Activated naive CD8-positive, alpha-beta T cell treated with anti-CD3 and anti-CD28 coated beads, Interleukin-2, amount 10 ng/mL, durations not matched to agents 7 days and 5 days (primary cell): ENCODE measurements at regions of chr17 and their contacts with region 1.

Region 1: DNA sequence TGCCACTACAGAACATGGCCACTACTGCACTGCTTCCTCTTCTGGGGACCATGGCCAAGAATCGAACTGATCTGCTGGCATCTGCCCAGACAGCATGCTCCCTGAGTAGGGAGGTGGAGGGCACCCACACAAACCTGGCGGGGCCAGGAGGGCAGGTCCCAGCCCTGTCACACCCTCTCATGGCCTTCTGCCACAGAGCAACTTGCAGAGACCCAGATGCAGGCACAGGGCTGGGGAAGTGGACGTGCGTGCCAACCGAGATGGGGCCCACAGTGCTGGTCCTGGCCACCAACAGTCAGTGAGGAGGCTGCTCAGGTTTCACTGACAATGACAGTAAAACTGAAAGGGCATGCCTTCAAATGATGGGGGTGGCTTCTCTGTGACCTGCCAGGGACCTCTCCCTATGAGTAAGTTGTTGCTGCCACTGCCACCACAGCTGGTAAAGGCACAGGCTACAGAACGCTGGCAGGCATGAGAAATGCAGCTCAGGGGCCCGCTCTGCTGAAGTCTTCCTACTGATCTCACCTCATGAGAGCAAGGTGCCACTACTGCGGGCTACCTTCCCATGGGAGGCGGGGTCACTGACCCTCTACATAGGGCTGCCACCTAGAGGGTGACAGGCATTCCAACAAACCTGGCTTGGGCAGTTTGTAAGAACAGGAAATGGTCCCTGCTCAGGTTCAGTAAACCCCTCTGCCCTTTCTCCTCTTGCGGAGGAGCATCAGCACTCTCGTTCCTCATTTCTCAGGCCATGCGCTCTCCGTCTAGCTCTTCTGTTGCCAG is 15.5 kb downstream of the HIC1 start:
- DNase-seq: no peak
- ATAC-seq: peak; percentile 79
- H3K4me3 Mint-ChIP-seq: peak overlapping the region; percentile 39
- H3K27ac Mint-ChIP-seq: peak overlapping the region; percentile 70
- H3K4me1 Mint-ChIP-seq: peaks cover 55% of the 10 kb centered on the region
- H3K27me3 Mint-ChIP-seq: no peaks in the 10 kb centered on the region

Region 2: GRCh38 chr17:1999557-2000251 is 70.7 kb before region 1 on chr17:
- POLR2A ChIA-PET with region 1: no interaction called
- DNase-seq: no peak
- ATAC-seq: no peak
- H3K4me3 Mint-ChIP-seq: peak overlapping the region; percentile 26
- H3K27ac Mint-ChIP-seq: no peak overlapping the region
- H3K4me1 Mint-ChIP-seq: peaks cover 2% of the 10 kb centered on the region
- H3K27me3 Mint-ChIP-seq: peaks cover 28% of the 10 kb centered on the region

Region 3: DNA sequence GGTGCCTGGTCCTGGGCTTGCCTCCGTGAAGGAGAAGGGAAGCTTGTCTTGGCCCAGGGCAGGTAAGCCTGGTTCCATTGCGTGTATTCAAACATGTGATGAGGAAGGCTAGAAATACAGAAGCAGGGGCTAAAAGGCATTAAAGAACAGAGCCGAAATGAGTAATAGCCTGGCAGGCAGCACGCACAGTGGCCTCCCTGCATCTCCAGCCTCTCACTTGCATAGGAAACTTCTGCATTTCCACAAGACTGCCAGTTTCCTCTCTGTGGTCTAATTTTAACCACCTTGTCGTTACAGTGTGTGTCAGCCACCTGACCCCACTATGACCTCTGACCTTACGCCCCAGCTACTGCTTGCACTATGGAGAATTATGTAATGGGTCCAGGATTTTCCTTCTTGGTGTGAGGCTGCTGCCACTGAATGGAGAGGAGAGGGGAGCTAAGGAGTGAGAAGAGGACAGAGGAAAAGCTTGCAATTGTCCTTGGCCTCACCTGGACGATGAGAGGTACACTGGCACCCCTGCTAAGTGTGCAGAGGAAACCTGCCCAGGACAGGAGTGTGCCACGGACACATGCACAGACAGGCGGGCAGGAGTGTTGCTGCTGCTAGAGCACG is 17.3 kb after region 1 on chr17:
- POLR2A ChIA-PET with region 1: interaction called, 12 read pairs
- DNase-seq: no peak
- ATAC-seq: peak; percentile 40
- H3K4me3 Mint-ChIP-seq: peak overlapping the region; percentile 74
- H3K27ac Mint-ChIP-seq: peak overlapping the region; percentile 74
- H3K4me1 Mint-ChIP-seq: peaks cover 74% of the 10 kb centered on the region
- H3K27me3 Mint-ChIP-seq: no peaks in the 10 kb centered on the region